ENCODE measurements at regions of chr6 and their contacts with region 1.

Region 1: DNA sequence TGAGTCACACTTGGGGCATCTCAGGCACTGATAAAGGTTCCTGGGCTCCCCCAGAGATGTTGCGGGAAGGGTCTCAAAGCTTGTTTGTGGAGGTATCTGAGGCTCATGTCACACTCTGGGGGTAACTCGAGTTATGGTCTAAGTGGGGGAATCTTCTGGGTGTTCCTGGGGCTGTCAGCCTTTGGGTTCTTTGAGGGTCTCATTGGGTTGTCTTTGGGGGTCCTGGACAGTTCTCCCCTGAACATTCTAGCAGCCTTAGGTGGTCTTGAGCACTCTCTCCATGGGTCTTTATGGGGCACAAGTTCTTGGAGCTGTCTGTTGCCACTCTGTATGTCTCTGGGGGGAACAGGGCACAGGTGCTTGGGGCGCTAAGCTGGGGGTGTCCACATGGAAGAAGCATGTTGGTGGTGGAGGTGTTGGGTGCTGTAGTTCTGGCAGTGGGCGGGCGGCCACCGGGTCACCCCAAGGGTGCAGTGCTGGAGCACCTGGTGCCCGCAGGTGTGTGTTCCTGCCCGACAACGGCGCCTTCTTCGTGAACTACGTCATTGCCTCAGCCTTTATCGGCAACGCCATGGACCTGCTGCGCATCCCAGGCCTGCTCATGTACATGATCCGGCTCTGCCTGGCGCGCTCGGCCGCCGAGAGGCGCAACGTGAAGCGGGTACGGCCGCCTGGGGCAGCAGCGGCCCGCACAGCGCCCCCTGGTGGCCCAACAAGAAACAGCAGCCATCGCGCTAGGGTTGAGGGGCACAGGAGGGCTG is 7.1 kb upstream of the CAPN11 start:
- DNase-seq: peak; percentile 90
- CTCF ChIP-seq: peak; percentile 98

Region 2: DNA sequence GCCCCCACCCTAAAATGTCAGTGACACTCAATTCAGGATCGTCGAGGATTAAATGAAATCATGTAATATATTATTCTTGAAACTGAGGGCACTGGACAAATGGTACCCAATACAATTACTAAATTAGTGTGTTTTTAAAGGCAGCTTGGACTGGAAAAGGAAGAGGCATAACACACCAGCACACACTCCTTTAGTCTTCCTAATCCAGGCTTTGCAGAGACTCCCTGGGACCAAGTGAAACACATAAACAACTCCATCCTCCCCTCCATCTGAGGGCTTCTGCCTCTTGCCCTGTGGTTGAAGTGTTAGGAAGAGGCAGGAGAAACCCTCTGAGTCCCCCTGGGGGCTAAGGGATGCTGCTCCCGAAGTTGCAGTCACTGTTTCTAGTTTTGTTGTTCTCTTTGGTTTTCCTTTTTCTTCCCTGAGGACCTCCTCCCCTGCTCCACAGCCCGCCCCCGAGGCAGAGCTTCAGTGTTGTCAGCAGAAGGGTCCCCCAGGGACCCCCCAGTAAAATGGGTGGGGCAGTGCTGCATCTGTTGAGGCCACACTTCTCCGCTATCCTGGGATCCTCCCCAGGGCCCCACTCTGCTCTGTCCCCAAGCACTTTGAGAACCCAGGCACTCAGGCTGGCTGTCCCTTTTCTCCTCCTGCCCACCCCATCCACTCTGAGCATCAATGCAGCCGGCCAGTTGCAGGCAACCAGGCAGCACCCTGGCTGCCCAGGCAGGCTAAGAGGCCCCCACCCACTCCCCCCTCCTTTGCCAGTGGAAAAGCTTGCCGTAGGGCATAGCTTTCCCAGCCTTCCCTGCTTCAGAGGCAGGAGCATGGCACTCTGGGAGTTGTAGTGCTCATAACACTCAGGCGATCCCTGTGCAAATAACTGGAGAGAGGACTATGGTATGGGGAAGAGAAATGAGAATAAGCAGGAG is 18.3 kb before region 1 on chr6:
- CTCF ChIA-PET with region 1: interaction called, 22 read pairs
- POLR2A ChIA-PET with region 1: interaction called, 5 read pairs
- DNase-seq: no peak
- CTCF ChIP-seq: no peak

Region 3: DNA sequence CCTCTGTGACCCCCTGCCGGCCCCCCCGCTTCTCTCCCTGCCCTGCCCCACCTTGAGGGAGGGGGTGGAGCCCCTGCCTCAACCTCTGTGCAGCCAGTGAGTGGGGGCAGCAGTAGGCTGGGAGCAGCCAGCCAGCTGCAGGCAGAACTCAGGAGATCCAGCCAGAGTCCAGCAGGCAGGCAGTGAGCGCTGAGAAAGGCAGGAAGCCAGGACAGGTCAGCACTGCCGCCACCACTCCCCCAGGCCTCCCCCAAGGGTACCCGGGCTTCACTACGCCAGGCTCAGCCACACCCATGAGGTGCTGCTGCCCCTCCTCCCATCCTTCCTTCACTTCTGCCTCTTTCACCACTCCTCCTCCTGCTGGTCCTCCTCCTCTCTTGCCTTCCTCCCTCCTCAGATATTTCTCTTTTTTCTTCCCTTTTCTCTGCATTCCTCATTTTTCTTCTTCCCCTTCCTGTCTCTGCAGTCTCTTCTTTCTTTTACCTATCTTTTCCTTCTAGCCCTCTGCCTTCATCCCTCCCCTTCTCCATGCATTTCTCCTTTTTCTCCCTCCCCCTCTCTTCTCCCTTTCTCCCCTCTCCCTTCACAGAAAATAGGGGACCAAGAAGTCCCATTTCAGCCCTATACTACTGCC is 12.7 kb before region 1 on chr6:
- CTCF ChIA-PET with region 1: interaction called, 22 read pairs
- POLR2A ChIA-PET with region 1: no interaction called
- DNase-seq: no peak
- CTCF ChIP-seq: no peak

Region 4: GRCh38 chr6:44161997-44162338 is 10.4 kb after region 1 on chr6:
- CTCF ChIA-PET with region 1: interaction called, 18 read pairs
- POLR2A ChIA-PET with region 1: no interaction called
- DNase-seq: no peak
- CTCF ChIP-seq: no peak